Colonic mucosa (tissue), 4 donors: ENCODE measurements at regions of chr10 and their contacts with region 1.

Region 1: GRCh38 chr10:77926566-77927401 is at the start of gene DLG5:
- DNase-seq: peak; percentile 75
- H3K4me3 ChIP-seq: peak within 1 kb of the TSS; percentile 80
- H3K27ac ChIP-seq: peak within 1 kb of the TSS; percentile 53
- H3K4me1 ChIP-seq: peaks cover 9% of the 10 kb centered on the region
- H3K27me3 ChIP-seq: peaks cover 3% of the 10 kb centered on the region
- CTCF ChIP-seq: no peak
- total RNA-seq, gene DLG5: 26.1 to 47.5 TPM

Region 2: GRCh38 chr10:77692782-77693181 is 234.0 kb before region 1 on chr10:
- intact Hi-C with region 1: no loop called
- DNase-seq: peak; percentile 6
- H3K4me3 ChIP-seq: no peak overlapping the region
- H3K27ac ChIP-seq: no peak overlapping the region
- H3K4me1 ChIP-seq: no peaks in the 10 kb centered on the region
- H3K27me3 ChIP-seq: no peaks in the 10 kb centered on the region
- CTCF ChIP-seq: no peak

Region 3: DNA sequence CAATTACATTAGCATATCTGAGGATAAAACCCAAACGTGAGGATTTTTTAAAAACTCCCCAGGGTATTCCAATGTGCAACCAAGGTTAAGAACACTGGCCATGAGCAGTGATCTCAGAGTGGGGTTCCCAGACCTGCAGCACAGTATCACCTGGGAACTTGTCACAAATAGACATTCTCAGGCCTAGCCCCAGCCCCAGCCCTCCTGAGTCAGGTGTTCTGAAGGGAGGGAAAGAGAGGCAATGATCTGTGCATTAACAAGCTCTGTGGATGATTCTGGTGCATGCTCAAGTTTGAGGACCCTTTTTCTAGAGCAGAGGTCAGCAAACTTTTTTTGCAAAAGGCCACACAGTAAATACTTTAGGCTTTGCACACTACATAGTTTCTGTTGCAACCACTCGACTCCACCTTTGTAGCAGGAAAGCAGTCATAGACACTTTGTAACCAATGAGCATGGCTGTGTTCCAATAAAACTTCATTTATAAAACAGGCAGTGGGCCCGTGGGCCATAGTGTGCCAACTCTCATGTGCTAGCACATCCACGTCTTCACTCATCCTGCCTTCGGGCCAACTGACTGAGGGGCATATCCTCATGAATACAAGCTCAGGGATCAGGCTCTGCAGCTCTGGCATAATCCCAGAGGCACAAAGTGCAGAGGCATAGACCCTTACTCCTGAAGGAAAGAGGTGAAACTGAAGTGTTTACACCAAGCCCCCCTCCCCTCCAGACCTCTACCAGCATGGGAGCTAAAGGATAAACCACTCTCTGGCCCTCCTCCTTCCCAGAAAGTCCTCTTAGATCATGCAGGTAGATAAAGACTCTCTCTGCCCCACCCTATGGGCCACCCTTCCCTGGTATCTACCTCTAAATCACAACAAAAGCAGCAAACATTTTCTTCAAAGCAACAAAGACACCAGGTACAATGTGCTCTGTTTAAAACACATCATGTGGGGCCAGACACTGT is 71.4 kb before region 1 on chr10:
- intact Hi-C with region 1: no loop called
- DNase-seq: no peak
- H3K4me3 ChIP-seq: no peak overlapping the region
- H3K27ac ChIP-seq: no peak overlapping the region
- H3K4me1 ChIP-seq: no peaks in the 10 kb centered on the region
- H3K27me3 ChIP-seq: no peaks in the 10 kb centered on the region
- CTCF ChIP-seq: no peak

Region 4: DNA sequence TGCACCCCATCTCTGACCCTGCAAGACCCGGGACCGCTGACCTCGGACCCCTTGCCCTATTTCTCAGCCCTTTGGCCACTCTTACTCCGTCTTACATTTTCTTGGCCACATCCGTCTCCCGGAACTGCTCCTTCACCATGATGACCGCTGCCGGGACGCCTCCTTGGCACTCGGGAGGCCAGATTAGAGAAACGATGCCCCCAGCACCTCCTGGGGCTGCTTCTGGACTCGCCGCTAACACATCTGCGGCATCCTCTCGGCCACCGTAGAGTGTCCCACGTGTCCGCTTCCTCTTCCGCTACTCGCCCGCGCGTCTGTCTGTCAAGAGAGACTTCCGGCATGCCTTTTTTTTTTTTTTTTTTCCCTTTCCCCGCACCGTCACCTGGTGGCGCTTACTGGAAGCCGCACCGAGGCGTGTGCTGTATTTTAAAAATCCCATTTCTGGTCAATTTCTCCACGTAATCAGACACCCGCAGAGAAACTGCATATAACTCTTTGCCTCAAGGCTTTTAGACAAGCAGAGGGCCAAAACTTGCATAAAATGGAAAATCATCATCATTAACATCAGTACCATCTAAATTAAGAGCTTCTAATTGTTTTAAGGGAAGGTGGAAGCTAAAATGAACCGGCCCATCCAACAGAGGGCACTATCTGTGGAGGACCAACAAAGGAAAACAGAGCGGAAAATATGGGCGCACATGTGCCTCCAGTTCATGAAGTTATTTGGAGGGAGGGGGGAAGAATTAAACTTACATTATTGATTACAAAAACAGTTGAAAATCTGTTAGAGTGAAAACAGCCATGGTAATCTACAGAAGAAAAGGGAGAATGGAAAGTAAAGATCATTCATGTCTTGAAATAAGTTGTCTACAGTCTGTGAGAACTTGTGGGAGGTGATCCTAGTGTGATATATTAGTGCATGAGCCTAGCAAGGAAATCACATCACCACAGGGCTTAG is 102.8 kb after region 1 on chr10 and contains the start of gene POLR3A:
- intact Hi-C with region 1: loop called (anchors 10 kb)
- DNase-seq: peak; percentile 93
- H3K4me3 ChIP-seq: peak within 1 kb of the TSS; percentile 98
- H3K27ac ChIP-seq: peak within 1 kb of the TSS; percentile 82
- H3K4me1 ChIP-seq: peaks cover 10% of the 10 kb centered on the region
- H3K27me3 ChIP-seq: no peaks in the 10 kb centered on the region
- CTCF ChIP-seq: peak; percentile 60
- total RNA-seq, gene POLR3A: 11.3 to 14.6 TPM

Region 5: DNA sequence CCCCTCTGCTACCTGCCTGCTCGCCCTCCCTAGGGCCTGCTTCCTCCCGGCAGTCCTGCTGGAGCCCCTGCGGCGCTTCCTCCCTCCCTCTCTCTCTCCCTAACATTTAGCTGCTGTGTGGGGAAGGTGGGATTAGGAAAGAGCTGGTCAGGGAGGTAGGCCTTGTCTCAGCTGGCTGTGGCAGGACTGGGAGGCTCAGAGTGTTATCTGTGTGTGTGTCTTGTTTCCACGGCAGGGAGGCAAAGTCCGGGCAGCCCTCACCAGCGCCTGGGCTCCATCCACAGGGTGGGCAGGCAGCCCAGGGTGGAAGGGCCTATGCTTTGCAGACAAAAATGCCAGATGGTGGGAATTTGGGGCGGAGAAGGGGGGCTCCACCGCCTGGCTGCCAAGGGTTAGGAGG is 212.6 kb after region 1 on chr10:
- intact Hi-C with region 1: no loop called
- DNase-seq: no peak
- H3K4me3 ChIP-seq: no peak overlapping the region
- H3K27ac ChIP-seq: no peak overlapping the region
- H3K4me1 ChIP-seq: no peaks in the 10 kb centered on the region
- H3K27me3 ChIP-seq: no peaks in the 10 kb centered on the region
- CTCF ChIP-seq: no peak